ENCODE measurements at regions of chr20 and their contacts with region 1.

Region 1: GRCh38 chr20:59159493-59160376 is 3.9 kb upstream of the ZNF831 start:
- DNase-seq: peak; percentile 75 to 94
- ATAC-seq: peak; percentile 88 to 96 (median 95)
- H3K4me3 ChIP-seq: peak overlapping the region; percentile 46
- H3K4me3 Mint-ChIP-seq: peak overlapping the region; percentile 94
- H3K27ac ChIP-seq: peak overlapping the region; percentile 100
- H3K27ac Mint-ChIP-seq: peak overlapping the region; percentile 100
- H3K4me1 ChIP-seq: peaks cover 43% of the 10 kb centered on the region
- H3K4me1 Mint-ChIP-seq: peaks cover 64 to 76% of the 10 kb centered on the region in 2 donors
- H3K27me3 ChIP-seq: no peaks in the 10 kb centered on the region
- H3K27me3 Mint-ChIP-seq: peaks cover 2 to 6% of the 10 kb centered on the region in 2 donors
- CTCF ChIP-seq: no peak

Region 2: GRCh38 chr20:59207742-59208357 is 48.1 kb after region 1 on chr20:
- intact Hi-C with region 1: loop called (anchors 1 kb)
- DNase-seq: peak; percentile 71 to 92
- ATAC-seq: peak; percentile 88 to 99 (median 98)
- H3K4me3 ChIP-seq: no peak overlapping the region
- H3K4me3 Mint-ChIP-seq: peak overlapping the region; percentile 40
- H3K27ac ChIP-seq: no peak overlapping the region
- H3K27ac Mint-ChIP-seq: peak overlapping the region; percentile 81 to 86
- H3K4me1 ChIP-seq: peaks cover 32% of the 10 kb centered on the region
- H3K4me1 Mint-ChIP-seq: peaks cover 41 to 42% of the 10 kb centered on the region in 2 donors
- H3K27me3 ChIP-seq: no peaks in the 10 kb centered on the region
- H3K27me3 Mint-ChIP-seq: no peaks in the 10 kb centered on the region
- CTCF ChIP-seq: peak; percentile 84

Region 3: GRCh38 chr20:59495894-59496510 is 336.3 kb after region 1 on chr20:
- intact Hi-C with region 1: no loop called
- DNase-seq: peak; percentile 58 to 78
- ATAC-seq: peak; percentile 30 to 74 (median 47)
- H3K4me3 ChIP-seq: no peak overlapping the region
- H3K4me3 Mint-ChIP-seq: no peak overlapping the region
- H3K27ac ChIP-seq: no peak overlapping the region
- H3K27ac Mint-ChIP-seq: no peak overlapping the region
- H3K4me1 ChIP-seq: no peaks in the 10 kb centered on the region
- H3K4me1 Mint-ChIP-seq: no peaks in the 10 kb centered on the region
- H3K27me3 ChIP-seq: peaks cover 2% of the 10 kb centered on the region
- H3K27me3 Mint-ChIP-seq: peaks cover 10 to 28% of the 10 kb centered on the region in 2 donors
- CTCF ChIP-seq: peak; percentile 93

Measured in natural killer cell (primary cell).